Transverse colon (tissue), 4 donors: ENCODE measurements at regions of chr3 and their contacts with region 1.

Region 1: DNA sequence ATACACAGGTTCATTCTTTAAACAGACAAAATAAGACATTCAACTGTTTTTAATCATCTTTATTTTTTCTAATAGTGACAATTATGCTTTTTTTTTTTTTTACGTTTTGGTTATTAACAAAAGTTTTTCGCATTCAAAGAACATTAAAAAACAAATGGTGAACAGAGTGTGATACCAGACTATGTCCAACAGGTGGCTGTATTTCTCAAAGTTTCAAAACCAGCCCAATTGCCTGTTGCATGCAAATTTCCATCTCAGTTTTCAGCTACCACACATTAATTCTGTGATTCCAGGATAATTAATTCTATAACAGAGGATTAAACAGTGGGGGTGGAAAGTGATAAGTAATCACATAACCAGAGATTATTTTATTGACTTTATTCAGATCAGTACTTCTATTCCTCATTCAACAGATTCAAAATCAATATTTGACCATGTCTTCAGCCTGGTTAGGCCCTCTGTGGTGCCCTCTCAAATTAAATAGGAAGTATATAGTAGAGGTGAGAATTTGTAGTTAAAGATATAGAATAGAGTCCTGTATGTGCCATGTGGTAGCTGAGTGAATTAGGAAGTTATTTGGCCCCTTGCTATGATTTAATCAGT is 122.2 kb upstream of the DCBLD2 start:
- DNase-seq: no peak
- H3K4me3 ChIP-seq: no peak overlapping the region
- H3K27ac ChIP-seq: no peak overlapping the region
- H3K4me1 ChIP-seq: no peaks in the 10 kb centered on the region
- H3K27me3 ChIP-seq: no peaks in the 10 kb centered on the region
- CTCF ChIP-seq: peak; percentile 51 to 66 (median 57)
- EP300 ChIP-seq: no peak
- POLR2A ChIP-seq: no peak

Region 2: DNA sequence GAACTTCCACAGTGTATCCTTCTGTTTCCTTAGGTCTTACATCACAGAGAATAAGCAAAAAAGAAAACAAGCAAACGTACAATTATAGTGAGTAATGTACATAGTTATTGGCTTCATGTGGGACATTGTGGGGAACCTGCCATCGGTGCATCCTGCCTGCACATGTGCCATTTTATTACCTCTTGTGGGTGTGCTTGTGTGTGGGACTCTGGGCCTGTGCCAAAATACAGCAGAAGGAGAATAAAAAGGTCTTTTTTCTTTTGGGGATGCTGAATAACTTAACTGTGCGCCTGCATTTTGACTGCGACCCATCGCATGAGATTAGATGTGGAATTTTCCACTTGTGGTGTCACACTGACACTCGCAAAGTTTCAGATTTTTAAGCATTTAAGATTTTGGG is 47.4 kb after region 1 on chr3:
- in situ Hi-C with region 1: no loop called
- intact Hi-C with region 1: no loop called
- DNase-seq: no peak
- H3K4me3 ChIP-seq: no peak overlapping the region
- H3K27ac ChIP-seq: no peak overlapping the region
- H3K4me1 ChIP-seq: no peaks in the 10 kb centered on the region
- H3K27me3 ChIP-seq: no peaks in the 10 kb centered on the region
- CTCF ChIP-seq: no peak
- EP300 ChIP-seq: no peak
- POLR2A ChIP-seq: no peak

Region 3: DNA sequence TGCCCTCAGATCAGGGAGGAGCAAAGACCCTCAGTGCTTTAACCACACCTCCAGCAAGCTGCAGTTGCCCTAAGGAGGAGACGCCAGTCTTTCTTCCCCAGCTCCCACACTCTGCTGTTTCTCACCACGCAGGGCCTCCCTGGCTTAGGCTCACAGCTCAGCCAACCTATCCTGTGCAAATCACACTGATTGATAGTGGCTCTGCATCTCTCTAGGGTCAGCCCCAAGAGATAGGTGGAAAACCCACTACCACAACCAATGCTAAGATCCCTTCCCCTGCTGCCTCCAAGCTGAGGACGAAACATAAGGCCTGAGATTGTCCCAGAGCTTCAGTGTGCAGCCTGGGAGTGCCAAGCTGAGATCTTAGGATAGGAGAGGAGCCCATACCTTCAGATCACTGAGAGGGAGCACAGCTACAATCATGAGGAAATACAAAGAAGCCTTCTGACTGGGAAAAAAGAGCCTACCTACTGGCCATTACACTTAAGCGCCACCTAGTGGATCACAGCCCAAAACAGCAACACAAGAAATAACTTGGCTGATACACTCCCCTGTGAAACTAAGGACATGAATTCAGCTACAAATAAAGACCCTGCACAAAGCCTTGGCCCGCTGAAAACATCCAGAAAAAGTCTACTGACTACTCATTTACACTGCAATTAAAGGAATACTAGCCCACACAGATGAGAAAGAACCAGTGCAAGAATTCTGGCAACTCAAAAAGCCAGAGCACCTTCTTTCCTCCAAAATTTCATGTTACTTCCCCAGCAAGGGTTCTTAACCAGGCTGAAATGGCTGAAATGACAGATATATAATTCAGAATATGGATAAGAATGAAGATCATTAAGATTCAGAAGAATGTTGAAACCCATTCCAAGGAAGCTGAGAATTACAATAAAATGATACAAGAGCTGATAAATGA is 149.3 kb after region 1 on chr3:
- in situ Hi-C with region 1: loop called in 1 of 4 experiments (anchors 10 kb)
- intact Hi-C with region 1: no loop called
- DNase-seq: peak; percentile 42
- H3K4me3 ChIP-seq: no peak overlapping the region
- H3K27ac ChIP-seq: no peak overlapping the region
- H3K4me1 ChIP-seq: no peaks in the 10 kb centered on the region
- H3K27me3 ChIP-seq: no peaks in the 10 kb centered on the region
- CTCF ChIP-seq: peak; percentile 34 to 57 (median 36)
- EP300 ChIP-seq: no peak
- POLR2A ChIP-seq: no peak

Region 4: GRCh38 chr3:99753268-99753975 is 729.7 kb after region 1 on chr3:
- in situ Hi-C with region 1: loop called in 3 of 4 experiments (anchors 10 to 25 kb)
- intact Hi-C with region 1: loop called (anchors 5 kb)
- DNase-seq: no peak
- H3K4me3 ChIP-seq: no peak overlapping the region
- H3K27ac ChIP-seq: no peak overlapping the region
- H3K4me1 ChIP-seq: no peaks in the 10 kb centered on the region
- H3K27me3 ChIP-seq: no peaks in the 10 kb centered on the region
- CTCF ChIP-seq: peak; percentile 45 to 64 (median 61)
- EP300 ChIP-seq: no peak
- POLR2A ChIP-seq: no peak